Right ventricle myocardium inferior (tissue), 1 donor: ENCODE measurements at regions of chr22 and their contacts with region 1.

Region 1: DNA sequence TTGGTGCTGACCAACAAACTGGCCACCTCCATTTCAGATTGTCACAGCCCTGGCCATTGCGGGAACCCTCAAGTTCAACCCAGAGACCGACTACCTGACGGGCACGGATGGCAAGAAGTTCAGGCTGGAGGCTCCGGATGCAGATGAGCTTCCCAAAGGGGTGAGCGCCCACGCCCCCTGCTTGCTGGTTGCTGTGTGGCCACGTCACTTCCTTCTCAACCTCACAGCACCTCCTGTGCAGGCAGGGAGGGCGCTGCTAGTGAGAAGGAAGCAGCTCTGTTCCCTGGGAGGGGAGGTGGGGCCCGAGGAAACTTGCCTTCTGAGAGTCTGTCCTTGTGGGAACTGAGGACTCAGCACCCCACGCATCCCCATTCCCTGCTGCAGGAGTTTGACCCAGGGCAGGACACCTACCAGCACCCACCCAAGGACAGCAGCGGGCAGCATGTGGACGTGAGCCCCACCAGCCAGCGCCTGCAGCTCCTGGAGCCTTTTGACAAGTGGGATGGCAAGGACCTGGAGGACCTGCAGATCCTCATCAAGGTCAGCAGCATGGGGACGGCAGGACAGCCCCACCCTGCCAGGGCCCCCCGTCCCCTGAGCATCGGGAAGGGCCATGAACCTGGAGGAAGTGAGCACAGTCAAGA is 19.3 kb downstream of the POLR3H start:
- DNase-seq: peak; percentile 74
- ATAC-seq: no peak

Region 2: DNA sequence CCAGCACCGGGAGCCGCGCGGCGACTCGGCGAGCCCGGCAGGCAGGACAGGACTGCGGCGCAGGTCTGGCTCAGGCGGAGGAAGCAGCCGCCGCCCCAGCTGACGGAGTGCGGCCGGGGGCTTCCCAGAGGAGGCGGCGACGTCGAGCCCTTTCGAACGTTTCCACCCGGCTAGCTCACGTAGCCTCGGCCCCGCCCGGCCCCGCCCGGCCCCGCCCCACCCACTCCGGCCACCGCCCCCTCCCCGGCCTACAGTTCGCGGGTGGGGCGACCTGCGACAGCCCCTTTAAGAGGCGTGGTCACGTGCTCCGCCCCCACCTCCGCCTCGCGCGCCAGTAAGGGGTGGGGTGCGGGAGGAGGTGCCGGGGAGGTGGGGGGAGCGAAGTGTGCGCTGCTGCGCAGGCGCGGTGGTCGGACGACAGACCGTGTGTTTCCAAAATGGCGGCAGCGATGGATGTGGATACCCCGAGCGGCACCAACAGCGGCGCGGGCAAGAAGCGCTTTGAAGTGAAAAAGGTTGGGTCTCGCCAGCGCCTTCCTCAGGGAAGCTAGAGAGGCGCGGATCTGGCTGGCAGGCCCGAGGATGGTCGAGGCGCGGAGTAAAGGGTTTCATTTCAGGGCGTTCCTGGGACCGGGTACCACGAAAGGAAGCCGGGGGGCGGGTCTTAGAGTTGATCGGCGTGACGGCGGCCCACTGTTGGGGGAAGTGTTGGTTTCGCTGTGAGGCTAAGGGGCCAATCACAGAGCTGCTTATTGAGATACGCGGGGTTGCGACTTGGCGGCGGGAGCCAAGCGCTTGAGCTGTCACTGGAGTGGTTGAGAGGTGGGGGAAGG is 573.8 kb before region 1 on chr22 and contains the start of gene RBX1:
- intact Hi-C with region 1: no loop called
- DNase-seq: peak; percentile 99
- ATAC-seq: peak; percentile 97
- total RNA-seq, gene RBX1: 74.1 TPM

Region 3: GRCh38 chr22:41403532-41404318 is 121.2 kb before region 1 on chr22:
- intact Hi-C with region 1: loop called (anchors 2 kb)
- DNase-seq: peak; percentile 93
- ATAC-seq: peak; percentile 91